GM12878 (cell line): ENCODE measurements at regions of chr3 and their contacts with region 1.

Region 1: GRCh38 chr3:52291508-52292181 is 4.0 kb downstream of the GLYCTK start:
- DNase-seq: no peak
- ATAC-seq: peak; percentile 53
- H3K4me3 ChIP-seq: no peak overlapping the region
- H3K27ac ChIP-seq: no peak overlapping the region
- H3K4me1 ChIP-seq: peaks cover 11% of the 10 kb centered on the region
- H3K27me3 ChIP-seq: no peaks in the 10 kb centered on the region
- CTCF ChIP-seq: peak; percentile 63 to 91 (median 67)
- EP300 ChIP-seq: no peak
- POLR2A ChIP-seq: no peak
- RAD21 ChIP-seq: peak; percentile 93

Region 2: GRCh38 chr3:52231502-52232293 is 59.9 kb before region 1 on chr3:
- CTCF ChIA-PET with region 1: interaction called, 67 read pairs
- POLR2A ChIA-PET with region 1: interaction called, 3 read pairs
- RAD21 ChIA-PET with region 1: interaction called, 12 read pairs
- SMC1A ChIA-PET with region 1: interaction called, 9 read pairs
- in situ Hi-C with region 1: no loop called
- intact Hi-C with region 1: no loop called
- DNase-seq: no peak
- ATAC-seq: peak; percentile 92
- H3K4me3 ChIP-seq: no peak overlapping the region
- H3K27ac ChIP-seq: no peak overlapping the region
- H3K4me1 ChIP-seq: peaks cover 9% of the 10 kb centered on the region
- H3K27me3 ChIP-seq: no peaks in the 10 kb centered on the region
- CTCF ChIP-seq: peak; percentile 92 to 98 (median 95)
- EP300 ChIP-seq: no peak
- POLR2A ChIP-seq: no peak
- RAD21 ChIP-seq: peak; percentile 78

Region 3: DNA sequence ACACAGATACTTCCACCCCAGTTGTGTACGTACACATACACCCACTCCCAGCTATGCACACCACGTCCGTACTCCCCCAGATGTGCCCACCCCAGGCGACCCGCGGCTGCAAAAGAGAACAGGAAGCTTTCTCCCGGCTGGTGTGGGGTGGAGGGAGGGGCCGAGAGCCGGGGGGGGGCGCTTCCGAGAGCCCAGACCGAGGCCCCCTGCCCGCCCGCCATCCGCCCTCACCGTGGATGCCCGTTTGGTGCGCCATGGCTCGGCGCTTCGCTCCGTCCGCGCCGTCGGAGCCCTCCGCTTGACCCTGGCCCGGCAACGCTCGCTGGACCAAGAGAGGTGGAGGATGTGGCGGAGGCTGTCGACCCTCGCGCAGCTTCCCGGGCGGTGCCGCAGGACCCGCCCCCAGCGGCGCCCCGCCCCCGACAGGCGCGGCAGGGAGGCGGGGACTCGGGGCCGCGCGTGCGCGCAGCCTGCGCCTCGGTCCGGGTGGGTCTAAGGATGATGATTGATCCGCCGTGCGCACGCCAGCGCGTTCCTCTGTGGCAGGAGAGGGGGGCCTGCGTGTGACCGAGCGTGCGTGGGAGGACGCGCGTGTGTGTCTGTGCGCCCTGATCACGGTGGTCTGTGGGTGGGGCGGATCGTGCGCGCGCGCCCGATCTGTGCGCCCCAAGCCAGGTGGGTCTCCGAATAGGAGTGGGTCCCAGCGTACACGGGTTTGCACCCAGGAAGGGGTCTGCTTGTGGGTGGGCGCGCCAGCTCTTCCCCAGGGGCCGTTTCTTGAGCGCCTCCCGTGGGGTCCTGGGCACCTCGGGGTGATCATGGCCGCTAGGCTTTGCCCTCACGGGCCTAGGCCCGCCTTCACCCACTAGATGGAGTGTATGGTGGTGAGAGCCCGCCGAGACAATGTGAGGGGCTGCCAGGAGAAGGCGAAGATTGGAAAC is 52.6 kb before region 1 on chr3 and contains the start of gene TWF2:
- CTCF ChIA-PET with region 1: interaction called, 67 read pairs
- POLR2A ChIA-PET with region 1: interaction called, 10 read pairs
- RAD21 ChIA-PET with region 1: interaction called, 5 read pairs
- SMC1A ChIA-PET with region 1: interaction called, 8 read pairs
- in situ Hi-C with region 1: no loop called
- intact Hi-C with region 1: no loop called
- DNase-seq: no peak
- ATAC-seq: peak; percentile 87
- H3K4me3 ChIP-seq: peak within 1 kb of the TSS; percentile 93
- H3K27ac ChIP-seq: peak within 1 kb of the TSS; percentile 88
- H3K4me1 ChIP-seq: peaks cover 40% of the 10 kb centered on the region
- H3K27me3 ChIP-seq: no peaks in the 10 kb centered on the region
- CTCF ChIP-seq: peak; percentile 43 to 49 (median 43)
- EP300 ChIP-seq: no peak
- POLR2A ChIP-seq: peak; percentile 91
- RAD21 ChIP-seq: peak; percentile 30; the same call in 1 of the 2 replicates
- polyA plus RNA-seq, gene TWF2: 0.16 to 3.4 TPM

Region 4: GRCh38 chr3:52253314-52254304 is 38.0 kb before region 1 on chr3:
- CTCF ChIA-PET with region 1: no interaction called
- POLR2A ChIA-PET with region 1: interaction called, 3 read pairs
- RAD21 ChIA-PET with region 1: interaction called, 10 read pairs
- SMC1A ChIA-PET with region 1: interaction called, 6 read pairs
- in situ Hi-C with region 1: no loop called
- intact Hi-C with region 1: no loop called
- DNase-seq: peak; percentile 85
- ATAC-seq: peak; percentile 98
- H3K4me3 ChIP-seq: no peak overlapping the region
- H3K27ac ChIP-seq: peak overlapping the region; percentile 88
- H3K4me1 ChIP-seq: peaks cover 18% of the 10 kb centered on the region
- H3K27me3 ChIP-seq: no peaks in the 10 kb centered on the region
- CTCF ChIP-seq: no peak
- EP300 ChIP-seq: peak; percentile 66 to 86; a peak in 3 of 4 replicates
- POLR2A ChIP-seq: peak; percentile 75
- RAD21 ChIP-seq: 0 out of 2 replicates have a peak, but pooled peaks have one; percentile 2

Region 5: DNA sequence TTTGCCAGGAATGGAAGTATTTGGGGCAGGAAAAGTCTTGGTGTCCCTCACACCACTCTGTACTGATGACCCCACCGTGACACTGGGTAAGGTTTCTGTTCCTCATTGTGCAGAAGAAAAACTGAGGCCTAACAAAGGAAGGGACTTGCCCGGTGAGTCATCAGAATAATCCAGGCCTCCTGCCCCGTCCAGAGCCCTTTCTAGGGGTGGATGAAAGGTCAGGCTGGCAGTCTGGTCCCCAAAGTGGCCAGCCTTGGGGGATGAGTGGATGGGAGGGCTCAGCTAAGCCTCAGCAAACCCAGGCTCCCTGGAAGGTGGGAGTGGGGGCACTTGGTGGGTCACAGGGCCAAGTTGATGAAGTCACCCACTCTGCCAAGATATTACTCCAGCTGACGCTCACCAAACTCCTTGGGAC is 22.1 kb after region 1 on chr3:
- CTCF ChIA-PET with region 1: interaction called, 4 read pairs
- POLR2A ChIA-PET with region 1: interaction called, 7 read pairs
- RAD21 ChIA-PET with region 1: interaction called, 11 read pairs
- SMC1A ChIA-PET with region 1: interaction called, 3 read pairs
- in situ Hi-C with region 1: no loop called
- intact Hi-C with region 1: no loop called
- DNase-seq: peak; percentile 61
- ATAC-seq: peak; percentile 92
- H3K4me3 ChIP-seq: peak overlapping the region; percentile 59
- H3K27ac ChIP-seq: peak overlapping the region; percentile 97
- H3K4me1 ChIP-seq: peaks cover 58% of the 10 kb centered on the region
- H3K27me3 ChIP-seq: no peaks in the 10 kb centered on the region
- CTCF ChIP-seq: no peak
- EP300 ChIP-seq: peak; percentile 91 to 98
- POLR2A ChIP-seq: peak; percentile 62; the same call in 1 of the 2 replicates
- RAD21 ChIP-seq: no peak

Region 6: GRCh38 chr3:52385157-52385556 is 93.5 kb after region 1 on chr3:
- CTCF ChIA-PET with region 1: interaction called, 8 read pairs
- POLR2A ChIA-PET with region 1: no interaction called
- RAD21 ChIA-PET with region 1: interaction called, 5 read pairs
- SMC1A ChIA-PET with region 1: interaction called, 5 read pairs
- in situ Hi-C with region 1: no loop called
- intact Hi-C with region 1: loop called (anchors 1 kb)
- DNase-seq: no peak
- ATAC-seq: peak; percentile 90
- H3K4me3 ChIP-seq: no peak overlapping the region
- H3K27ac ChIP-seq: no peak overlapping the region
- H3K4me1 ChIP-seq: no peaks in the 10 kb centered on the region; the same call in 1 of the 2 replicates
- H3K27me3 ChIP-seq: no peaks in the 10 kb centered on the region
- CTCF ChIP-seq: peak; percentile 59 to 73 (median 72)
- EP300 ChIP-seq: no peak
- POLR2A ChIP-seq: no peak
- RAD21 ChIP-seq: peak; percentile 55

Region 7: GRCh38 chr3:52444860-52445793 is 153.5 kb after region 1 on chr3 and contains the start of gene SEMA3G:
- CTCF ChIA-PET with region 1: interaction called, 7 read pairs
- POLR2A ChIA-PET with region 1: no interaction called
- RAD21 ChIA-PET with region 1: interaction called, 6 read pairs
- SMC1A ChIA-PET with region 1: interaction called, 4 read pairs
- in situ Hi-C with region 1: no loop called
- intact Hi-C with region 1: loop called (anchors 5 kb)
- DNase-seq: no peak
- ATAC-seq: peak; percentile 98
- H3K4me3 ChIP-seq: no peak within 1 kb of the TSS
- H3K27ac ChIP-seq: no peak within 1 kb of the TSS
- H3K4me1 ChIP-seq: no peaks in the 10 kb centered on the region
- H3K27me3 ChIP-seq: no peaks in the 10 kb centered on the region
- CTCF ChIP-seq: peak; percentile 30 to 73 (median 52)
- EP300 ChIP-seq: no peak
- POLR2A ChIP-seq: peak; percentile 71
- RAD21 ChIP-seq: 0 out of 2 replicates have a peak, but pooled peaks have one; percentile 14
- polyA plus RNA-seq, gene SEMA3G: not detected